B cell (primary cell): ENCODE measurements at regions of chr1 and their contacts with region 1.

Region 1: GRCh38 chr1:154961497-154962262 is at the start of gene PYGO2:
- DNase-seq: peak; percentile 93
- ATAC-seq: peak; percentile 86
- H3K4me3 ChIP-seq: peak within 1 kb of the TSS; percentile 62 to 91 (median 81)
- H3K4me3 Mint-ChIP-seq: peak within 1 kb of the TSS; percentile 91
- H3K27ac ChIP-seq: peak within 1 kb of the TSS; percentile 76 to 96
- H3K27ac Mint-ChIP-seq: peak within 1 kb of the TSS; percentile 94
- H3K4me1 ChIP-seq: peaks cover 22 to 35% of the 10 kb centered on the region in 2 donors
- H3K4me1 Mint-ChIP-seq: peaks cover 28% of the 10 kb centered on the region
- H3K27me3 ChIP-seq: no peaks in the 10 kb centered on the region
- H3K27me3 Mint-ChIP-seq: no peaks in the 10 kb centered on the region
- CTCF ChIP-seq: peak; percentile 82
- total RNA-seq, gene PYGO2: 47.5 and 52.7 TPM in 2 replicates

Region 2: DNA sequence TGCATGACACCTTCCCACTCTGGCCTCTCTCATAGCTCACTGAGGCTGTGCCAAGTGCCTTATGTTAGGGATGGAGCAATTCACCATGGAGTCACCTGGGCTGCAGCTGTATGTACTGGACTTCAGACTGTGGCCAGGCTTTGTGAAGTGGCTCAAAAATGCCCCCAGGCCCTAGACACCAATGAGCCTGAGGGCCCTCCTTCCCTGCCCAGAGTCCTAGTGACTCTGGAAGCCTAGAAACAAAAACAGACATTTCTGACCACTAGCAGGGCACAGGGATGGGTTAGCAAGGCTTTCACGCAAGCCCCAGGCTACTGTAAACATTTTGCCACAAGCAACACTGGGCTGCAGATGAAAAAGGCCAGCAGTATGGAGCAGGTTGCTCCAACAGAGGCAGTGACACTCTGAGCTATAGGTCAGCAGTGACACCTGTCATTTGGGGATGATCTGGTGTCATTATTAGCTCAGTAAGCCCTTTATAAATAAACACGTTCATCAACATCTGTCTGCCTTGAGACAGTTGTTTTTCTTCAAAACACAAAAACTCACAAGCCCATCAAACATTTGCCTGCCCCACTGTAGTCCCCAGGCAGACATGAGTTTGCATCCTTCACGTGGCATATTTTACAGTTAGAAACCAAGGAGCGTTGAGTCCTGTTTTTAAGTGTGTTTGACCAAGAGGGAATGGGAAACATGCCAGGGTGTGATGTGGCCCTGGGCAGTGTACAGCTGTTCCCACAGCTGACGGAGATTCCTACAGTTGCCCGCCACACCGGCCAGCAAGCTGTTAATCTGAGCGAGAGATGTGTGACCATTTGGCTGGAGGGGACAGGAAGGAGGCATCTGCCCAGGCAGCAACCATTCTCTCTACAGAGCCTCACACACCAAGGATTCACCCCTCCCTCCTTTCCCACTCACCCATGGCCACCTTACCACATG is 158.4 kb before region 1 on chr1:
- CTCF ChIA-PET with region 1: no interaction called
- POLR2A ChIA-PET with region 1: no interaction called
- intact Hi-C with region 1: no loop called
- DNase-seq: no peak
- ATAC-seq: no peak
- H3K4me3 ChIP-seq: no peak overlapping the region
- H3K4me3 Mint-ChIP-seq: no peak overlapping the region
- H3K27ac ChIP-seq: no peak overlapping the region
- H3K27ac Mint-ChIP-seq: no peak overlapping the region
- H3K4me1 ChIP-seq: peaks cover 4 to 15% of the 10 kb centered on the region in 2 donors
- H3K4me1 Mint-ChIP-seq: peaks cover 17% of the 10 kb centered on the region
- H3K27me3 ChIP-seq: peaks cover 0 to 28% (median 5%) of the 10 kb centered on the region in 4 experiments
- H3K27me3 Mint-ChIP-seq: peaks cover 38% of the 10 kb centered on the region
- CTCF ChIP-seq: no peak

Region 3: GRCh38 chr1:154911691-154912550 is 49.8 kb before region 1 on chr1:
- CTCF ChIA-PET with region 1: no interaction called
- POLR2A ChIA-PET with region 1: no interaction called
- intact Hi-C with region 1: no loop called
- DNase-seq: no peak
- ATAC-seq: no peak
- H3K4me3 ChIP-seq: no peak overlapping the region
- H3K4me3 Mint-ChIP-seq: no peak overlapping the region
- H3K27ac ChIP-seq: no peak overlapping the region
- H3K27ac Mint-ChIP-seq: no peak overlapping the region
- H3K4me1 ChIP-seq: no peaks in the 10 kb centered on the region
- H3K4me1 Mint-ChIP-seq: no peaks in the 10 kb centered on the region
- H3K27me3 ChIP-seq: no peaks in the 10 kb centered on the region
- H3K27me3 Mint-ChIP-seq: no peaks in the 10 kb centered on the region
- CTCF ChIP-seq: no peak

Region 4: GRCh38 chr1:154974063-154974807 is 12.6 kb after region 1 on chr1 and contains the start of gene CKS1B:
- CTCF ChIA-PET with region 1: interaction called, 38 read pairs
- POLR2A ChIA-PET with region 1: interaction called, 26 read pairs
- intact Hi-C with region 1: loop called (anchors 1 kb)
- DNase-seq: peak; percentile 100
- ATAC-seq: peak; percentile 80
- H3K4me3 ChIP-seq: peak within 1 kb of the TSS; percentile 71 to 99 (median 90)
- H3K4me3 Mint-ChIP-seq: no peak within 1 kb of the TSS
- H3K27ac ChIP-seq: peak within 1 kb of the TSS; percentile 90 to 94
- H3K27ac Mint-ChIP-seq: no peak within 1 kb of the TSS
- H3K4me1 ChIP-seq: peaks cover 22 to 44% of the 10 kb centered on the region in 2 donors
- H3K4me1 Mint-ChIP-seq: peaks cover 29% of the 10 kb centered on the region
- H3K27me3 ChIP-seq: no peaks in the 10 kb centered on the region
- H3K27me3 Mint-ChIP-seq: no peaks in the 10 kb centered on the region
- CTCF ChIP-seq: no peak
- total RNA-seq, gene CKS1B: 16.8 and 17.5 TPM in 2 replicates

Region 5: GRCh38 chr1:155091071-155091709 is 129.5 kb after region 1 on chr1:
- CTCF ChIA-PET with region 1: no interaction called
- POLR2A ChIA-PET with region 1: no interaction called
- intact Hi-C with region 1: no loop called
- DNase-seq: peak; percentile 86
- ATAC-seq: peak; percentile 91
- H3K4me3 ChIP-seq: no peak overlapping the region
- H3K4me3 Mint-ChIP-seq: no peak overlapping the region
- H3K27ac ChIP-seq: no peak overlapping the region
- H3K27ac Mint-ChIP-seq: no peak overlapping the region
- H3K4me1 ChIP-seq: peaks cover 13 to 17% of the 10 kb centered on the region in 2 donors
- H3K4me1 Mint-ChIP-seq: peaks cover 8% of the 10 kb centered on the region
- H3K27me3 ChIP-seq: peaks cover 0 to 6% (median 1%) of the 10 kb centered on the region in 4 experiments
- H3K27me3 Mint-ChIP-seq: peaks cover 12% of the 10 kb centered on the region
- CTCF ChIP-seq: peak; percentile 97